Naive thymus-derived CD4-positive, alpha-beta T cell (primary cell): ENCODE measurements at regions of chr21 and their contacts with region 1.

Region 1: DNA sequence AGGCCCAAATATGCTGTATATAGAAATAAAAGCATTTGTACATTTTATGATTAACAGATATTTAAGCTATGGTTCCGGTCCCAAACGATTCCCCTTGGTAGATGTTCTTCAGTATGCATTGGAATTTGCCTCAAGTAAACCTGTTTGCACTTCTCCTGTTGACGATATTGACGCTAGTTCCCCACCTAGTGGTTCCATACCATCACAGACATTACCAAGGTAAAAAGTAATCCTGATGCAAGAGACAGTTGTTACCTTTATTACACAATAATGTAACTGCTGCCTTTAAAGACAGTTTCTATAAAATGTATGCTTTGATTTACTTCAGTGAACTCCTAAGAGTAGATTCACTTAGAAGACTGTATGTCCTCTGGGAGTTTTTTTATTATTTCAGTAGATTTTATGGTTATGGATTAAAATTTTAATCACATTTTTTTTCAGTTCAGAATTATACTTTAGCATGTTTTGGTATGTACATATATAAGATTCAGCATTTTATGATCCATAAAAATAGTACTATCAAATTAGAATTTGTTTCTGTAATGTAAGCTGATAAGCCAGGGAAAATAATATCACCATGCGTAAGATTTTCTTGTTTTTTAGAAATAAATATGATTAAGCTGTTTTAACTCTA is 96.5 kb downstream of the USP25 start:
- DNase-seq: peak in 7 of 9 donors; percentile 6 to 51 (median 31)
- ATAC-seq: peak; percentile 68
- H3K4me3 ChIP-seq: no peak overlapping the region
- H3K4me3 Mint-ChIP-seq: peak overlapping the region in 2 of 10 donors; percentile 1 to 6
- H3K27ac ChIP-seq: no peak overlapping the region
- H3K27ac Mint-ChIP-seq: peak overlapping the region in 4 of 9 donors; percentile 1 to 56 (median 36)
- H3K4me1 ChIP-seq: peaks cover 18 to 21% of the 10 kb centered on the region in 2 donors
- H3K4me1 Mint-ChIP-seq: peaks cover 18 to 54% (median 47%) of the 10 kb centered on the region in 7 donors
- H3K27me3 ChIP-seq: no peaks in the 10 kb centered on the region
- H3K27me3 Mint-ChIP-seq: no peaks in the 10 kb centered on the region

Region 2: GRCh38 chr21:14259747-14260146 is 1566.5 kb before region 1 on chr21:
- CTCF ChIA-PET with region 1: no interaction called
- POLR2A ChIA-PET with region 1: no interaction called
- intact Hi-C with region 1: loop called in 1 of 2 experiments (anchors 1 kb)
- DNase-seq: peak in 5 of 9 donors; percentile 13 to 28 (median 23)
- ATAC-seq: peak; percentile 59
- H3K4me3 ChIP-seq: no peak overlapping the region
- H3K4me3 Mint-ChIP-seq: no peak overlapping the region
- H3K27ac ChIP-seq: no peak overlapping the region
- H3K27ac Mint-ChIP-seq: no peak overlapping the region
- H3K4me1 ChIP-seq: no peaks in the 10 kb centered on the region
- H3K4me1 Mint-ChIP-seq: no peaks in the 10 kb centered on the region
- H3K27me3 ChIP-seq: no peaks in the 10 kb centered on the region
- H3K27me3 Mint-ChIP-seq: peaks cover 2 to 19% (median 12%) of the 10 kb centered on the region in 5 donors

Region 3: DNA sequence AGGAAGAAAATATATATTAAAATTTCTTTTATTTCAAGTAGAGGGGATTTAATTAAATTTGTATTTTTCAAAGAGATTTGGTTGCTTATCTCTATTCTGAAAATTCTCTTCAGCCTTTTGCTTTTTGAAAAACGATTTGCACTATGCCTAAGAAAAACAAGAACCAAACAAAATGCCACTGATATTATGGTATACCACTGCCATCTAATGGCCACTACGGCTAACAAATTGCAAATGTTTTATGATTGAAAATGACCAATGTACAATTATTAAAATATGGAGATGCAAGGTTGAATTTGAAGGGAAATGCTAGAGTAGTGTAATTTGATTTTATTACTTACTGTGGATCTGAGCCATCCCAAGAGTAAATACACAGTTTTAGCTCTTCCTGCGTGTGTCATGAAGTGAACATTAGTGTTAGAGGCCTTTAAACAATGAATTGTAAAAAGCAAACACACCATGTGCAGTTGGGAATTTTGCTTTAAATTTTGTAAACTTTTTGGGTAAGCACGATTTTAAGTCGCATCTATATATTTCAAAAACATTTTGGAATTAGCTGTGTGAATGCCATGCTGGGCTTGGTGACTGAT is 233.9 kb before region 1 on chr21:
- CTCF ChIA-PET with region 1: no interaction called
- POLR2A ChIA-PET with region 1: no interaction called
- intact Hi-C with region 1: loop called in 1 of 2 experiments (anchors 2 kb)
- DNase-seq: peak in 5 of 9 donors; percentile 23 to 41 (median 29)
- ATAC-seq: peak; percentile 68
- H3K4me3 ChIP-seq: no peak overlapping the region
- H3K4me3 Mint-ChIP-seq: no peak overlapping the region
- H3K27ac ChIP-seq: no peak overlapping the region
- H3K27ac Mint-ChIP-seq: no peak overlapping the region
- H3K4me1 ChIP-seq: no peaks in the 10 kb centered on the region
- H3K4me1 Mint-ChIP-seq: no peaks in the 10 kb centered on the region
- H3K27me3 ChIP-seq: no peaks in the 10 kb centered on the region
- H3K27me3 Mint-ChIP-seq: peaks cover 0 to 20% (median 5%) of the 10 kb centered on the region in 5 donors

Region 4: GRCh38 chr21:15679630-15680029 is 146.6 kb before region 1 on chr21:
- CTCF ChIA-PET with region 1: interaction called, 3 read pairs
- POLR2A ChIA-PET with region 1: no interaction called
- intact Hi-C with region 1: loop called (anchors 1 to 5 kb)
- DNase-seq: no peak
- ATAC-seq: no peak
- H3K4me3 ChIP-seq: no peak overlapping the region
- H3K4me3 Mint-ChIP-seq: no peak overlapping the region
- H3K27ac ChIP-seq: no peak overlapping the region
- H3K27ac Mint-ChIP-seq: no peak overlapping the region
- H3K4me1 ChIP-seq: no peaks in the 10 kb centered on the region
- H3K4me1 Mint-ChIP-seq: peaks cover 0 to 9% (median 6%) of the 10 kb centered on the region in 7 donors
- H3K27me3 ChIP-seq: no peaks in the 10 kb centered on the region
- H3K27me3 Mint-ChIP-seq: no peaks in the 10 kb centered on the region

Region 5: GRCh38 chr21:15797577-15798363 is 28.5 kb before region 1 on chr21:
- CTCF ChIA-PET with region 1: no interaction called
- POLR2A ChIA-PET with region 1: no interaction called
- intact Hi-C with region 1: loop called in 1 of 2 experiments (anchors 5 kb)
- DNase-seq: no peak
- ATAC-seq: no peak
- H3K4me3 ChIP-seq: no peak overlapping the region
- H3K4me3 Mint-ChIP-seq: no peak overlapping the region
- H3K27ac ChIP-seq: no peak overlapping the region
- H3K27ac Mint-ChIP-seq: peak overlapping the region in 6 of 9 donors; percentile 1 to 66 (median 32)
- H3K4me1 ChIP-seq: peaks cover 0 to 12% of the 10 kb centered on the region in 2 donors
- H3K4me1 Mint-ChIP-seq: peaks cover 31 to 90% (median 61%) of the 10 kb centered on the region in 7 donors
- H3K27me3 ChIP-seq: no peaks in the 10 kb centered on the region
- H3K27me3 Mint-ChIP-seq: no peaks in the 10 kb centered on the region

Region 6: GRCh38 chr21:17059936-17060335 is 1233.7 kb after region 1 on chr21:
- CTCF ChIA-PET with region 1: no interaction called
- POLR2A ChIA-PET with region 1: no interaction called
- intact Hi-C with region 1: no loop called
- DNase-seq: no peak
- ATAC-seq: no peak
- H3K4me3 ChIP-seq: no peak overlapping the region
- H3K4me3 Mint-ChIP-seq: no peak overlapping the region
- H3K27ac ChIP-seq: no peak overlapping the region
- H3K27ac Mint-ChIP-seq: no peak overlapping the region
- H3K4me1 ChIP-seq: no peaks in the 10 kb centered on the region
- H3K4me1 Mint-ChIP-seq: no peaks in the 10 kb centered on the region
- H3K27me3 ChIP-seq: no peaks in the 10 kb centered on the region
- H3K27me3 Mint-ChIP-seq: no peaks in the 10 kb centered on the region